ENCODE measurements at regions of chr1 and their contacts with region 1.

Region 1: DNA sequence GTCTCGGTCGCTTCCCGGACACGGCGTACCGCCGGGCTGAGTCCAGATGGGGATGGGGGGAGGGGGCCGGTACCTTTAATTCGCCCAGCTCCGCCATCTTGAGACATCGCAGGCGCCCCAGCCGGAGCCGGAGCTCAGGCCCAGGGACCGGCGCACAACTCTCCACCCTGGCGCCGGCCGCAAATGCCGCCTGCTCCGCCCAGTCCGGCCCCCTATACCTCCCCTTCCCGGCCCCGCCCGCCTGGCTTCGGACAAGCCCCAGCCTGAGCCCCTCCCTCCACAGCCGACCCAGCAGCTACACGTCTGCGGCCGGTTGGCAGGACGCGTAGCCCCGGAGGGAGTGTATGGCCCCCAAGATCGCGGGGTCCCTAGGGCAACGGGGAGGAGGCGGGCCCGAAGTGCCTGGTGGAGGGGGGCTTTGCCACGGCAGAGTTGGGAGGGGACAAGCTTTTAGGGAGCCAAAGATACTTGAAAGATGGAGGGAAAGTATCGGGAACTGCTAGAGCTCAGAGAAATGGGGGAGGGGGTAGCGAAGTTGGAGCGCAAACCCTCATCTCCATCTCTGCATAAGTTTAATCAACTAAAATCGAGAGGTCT is at the start of gene PIAS3:
- DNase-seq: peak; percentile 93
- H3K4me3 Mint-ChIP-seq: peak within 1 kb of the TSS; percentile 90
- H3K27ac Mint-ChIP-seq: peak within 1 kb of the TSS; percentile 76
- H3K4me1 Mint-ChIP-seq: peaks cover 15% of the 10 kb centered on the region
- H3K27me3 Mint-ChIP-seq: no peaks in the 10 kb centered on the region
- total RNA-seq, gene PIAS3: 17.8 to 17.9 TPM

Region 2: DNA sequence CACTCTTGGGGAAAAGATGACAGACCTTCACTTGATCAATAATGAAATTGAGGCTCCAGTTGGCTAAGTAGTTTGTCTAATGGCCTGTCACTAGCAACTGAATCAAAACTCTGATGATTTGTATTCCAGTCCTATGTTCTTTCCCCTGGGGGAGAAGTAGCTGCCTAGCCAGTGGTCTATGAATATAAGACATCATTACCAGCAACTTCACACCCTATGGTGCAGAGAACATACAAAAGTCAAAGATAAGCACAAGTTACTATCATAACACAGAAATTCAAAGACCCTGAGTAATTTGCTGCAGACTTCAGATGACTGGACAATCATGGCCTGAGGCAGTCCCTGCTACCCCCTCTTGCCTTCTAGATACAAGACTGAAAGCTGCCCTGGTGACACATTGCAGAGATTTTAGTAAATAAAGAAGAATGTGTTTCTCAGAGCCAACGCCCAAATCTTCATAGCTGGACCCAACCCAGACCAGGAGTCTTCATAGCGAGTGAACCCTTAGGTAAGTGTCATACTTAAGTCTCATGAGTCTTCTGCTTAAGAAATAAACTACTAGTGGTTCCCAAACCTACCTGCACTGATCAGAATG is 152.8 kb before region 1 on chr1:
- CTCF ChIA-PET with region 1: no interaction called
- POLR2A ChIA-PET with region 1: no interaction called
- intact Hi-C with region 1: no loop called
- DNase-seq: no peak
- H3K4me3 Mint-ChIP-seq: no peak overlapping the region
- H3K27ac Mint-ChIP-seq: no peak overlapping the region
- H3K4me1 Mint-ChIP-seq: no peaks in the 10 kb centered on the region
- H3K27me3 Mint-ChIP-seq: no peaks in the 10 kb centered on the region

Region 3: GRCh38 chr1:145871994-145872924 is 13.3 kb after region 1 on chr1:
- CTCF ChIA-PET with region 1: interaction called, 25 read pairs
- POLR2A ChIA-PET with region 1: interaction called, 20 read pairs
- intact Hi-C with region 1: no loop called
- DNase-seq: peak; percentile 50
- H3K4me3 Mint-ChIP-seq: peak overlapping the region; percentile 70
- H3K27ac Mint-ChIP-seq: no peak overlapping the region
- H3K4me1 Mint-ChIP-seq: peaks cover 14% of the 10 kb centered on the region
- H3K27me3 Mint-ChIP-seq: no peaks in the 10 kb centered on the region

Region 4: DNA sequence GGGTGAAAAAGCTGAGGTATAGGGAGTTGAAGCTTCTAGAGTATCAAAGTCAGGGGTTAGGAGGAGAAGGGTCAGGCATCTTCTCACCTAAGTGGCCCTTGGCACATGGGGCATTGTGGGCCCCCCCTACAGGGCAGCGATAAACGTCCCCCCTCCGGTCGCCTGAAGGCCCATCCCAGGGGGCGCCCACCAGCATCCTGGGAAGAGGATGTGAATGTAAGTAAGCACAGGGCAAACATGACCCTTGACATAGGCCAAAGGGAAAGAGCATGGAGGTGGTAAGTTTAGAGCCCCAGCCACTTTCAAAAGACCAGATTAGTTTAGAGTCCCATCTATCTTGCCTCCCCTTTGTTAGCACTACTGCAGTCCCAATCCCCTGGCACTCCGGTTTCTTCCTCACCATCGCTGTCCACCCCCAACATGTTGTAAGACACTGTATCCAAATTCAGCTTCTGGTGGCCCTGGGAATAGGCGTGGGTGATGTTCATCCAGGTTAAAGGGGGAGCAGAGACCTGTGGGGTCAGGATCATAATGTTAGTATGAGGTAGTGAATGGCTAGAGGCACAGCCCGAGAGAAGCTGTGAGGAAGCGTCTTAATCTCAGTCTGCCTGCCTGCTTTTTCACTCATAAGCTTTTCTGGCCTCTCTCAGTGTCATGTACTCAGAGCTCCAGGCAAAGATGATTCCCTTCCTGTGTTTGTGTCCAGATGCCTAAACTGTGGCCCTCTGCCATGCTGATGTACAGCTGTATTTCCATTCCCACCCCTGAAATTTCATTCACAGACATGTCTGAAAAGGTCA is 48.2 kb after region 1 on chr1:
- CTCF ChIA-PET with region 1: interaction called, 16 read pairs
- POLR2A ChIA-PET with region 1: no interaction called
- intact Hi-C with region 1: no loop called
- DNase-seq: no peak
- H3K4me3 Mint-ChIP-seq: no peak overlapping the region
- H3K27ac Mint-ChIP-seq: no peak overlapping the region
- H3K4me1 Mint-ChIP-seq: peaks cover 2% of the 10 kb centered on the region
- H3K27me3 Mint-ChIP-seq: no peaks in the 10 kb centered on the region

Region 5: DNA sequence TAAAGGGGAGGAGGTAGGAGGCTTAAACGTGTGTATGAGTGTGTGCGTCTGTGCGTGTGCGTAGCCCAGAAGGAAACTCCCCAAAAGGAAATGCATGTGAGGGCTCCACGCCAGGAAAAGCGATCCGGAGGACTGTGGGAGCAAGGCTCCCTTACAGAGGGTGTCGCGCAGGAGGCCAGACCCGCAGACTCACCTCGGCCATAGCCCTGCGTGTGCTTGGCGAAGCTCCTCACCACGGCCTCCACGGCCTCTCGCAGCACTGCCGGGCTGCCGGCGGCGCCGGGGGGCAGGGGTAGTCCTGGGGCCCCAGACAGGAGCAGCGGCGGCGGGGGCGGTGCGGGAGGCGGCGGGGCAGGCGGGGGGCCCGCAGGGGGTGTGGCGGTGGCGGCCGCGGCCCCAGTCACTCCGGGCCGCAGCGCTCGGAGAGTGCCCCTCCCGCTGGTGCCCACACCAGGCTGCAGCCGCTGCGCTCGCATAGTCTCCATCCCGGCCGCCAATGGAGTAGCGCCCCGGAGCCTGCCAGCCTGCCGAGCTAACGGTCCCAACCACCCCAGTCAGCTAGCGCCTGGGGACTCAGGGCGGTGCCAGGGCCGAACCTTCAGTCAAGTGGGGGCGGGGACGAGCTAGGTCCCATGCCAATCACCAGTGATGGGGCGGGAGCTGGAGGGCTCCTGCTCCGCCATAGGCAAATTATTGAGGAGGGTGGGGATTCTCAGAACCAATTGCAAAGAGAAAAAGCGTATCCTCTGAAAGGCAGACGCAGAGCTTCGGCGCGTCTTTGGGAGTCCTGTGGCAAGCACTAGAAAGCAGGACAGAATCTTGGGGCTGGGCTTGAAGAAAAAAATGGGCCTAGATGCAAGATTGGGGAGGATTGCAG is 98.7 kb after region 1 on chr1 and contains the start of gene LIX1L:
- CTCF ChIA-PET with region 1: interaction called, 3 read pairs
- POLR2A ChIA-PET with region 1: interaction called, 14 read pairs
- intact Hi-C with region 1: loop called (anchors 2 kb)
- DNase-seq: peak; percentile 97
- H3K4me3 Mint-ChIP-seq: peak within 1 kb of the TSS; percentile 87
- H3K27ac Mint-ChIP-seq: peak within 1 kb of the TSS; percentile 79
- H3K4me1 Mint-ChIP-seq: peaks cover 57% of the 10 kb centered on the region
- H3K27me3 Mint-ChIP-seq: no peaks in the 10 kb centered on the region
- total RNA-seq, gene LIX1L: 46.6 to 47.8 TPM

Region 6: GRCh38 chr1:145996433-145997015 is 137.5 kb after region 1 on chr1 and contains the start of gene TXNIP:
- CTCF ChIA-PET with region 1: no interaction called
- POLR2A ChIA-PET with region 1: no interaction called
- intact Hi-C with region 1: loop called (anchors 5 kb)
- DNase-seq: peak; percentile 97
- H3K4me3 Mint-ChIP-seq: peak within 1 kb of the TSS; percentile 88
- H3K27ac Mint-ChIP-seq: peak within 1 kb of the TSS; percentile 92
- H3K4me1 Mint-ChIP-seq: peaks cover 63% of the 10 kb centered on the region
- H3K27me3 Mint-ChIP-seq: no peaks in the 10 kb centered on the region
- total RNA-seq, gene TXNIP: 82.6 to 88.8 TPM